ENCODE measurements at regions of chr19 and their contacts with region 1.

Region 1: DNA sequence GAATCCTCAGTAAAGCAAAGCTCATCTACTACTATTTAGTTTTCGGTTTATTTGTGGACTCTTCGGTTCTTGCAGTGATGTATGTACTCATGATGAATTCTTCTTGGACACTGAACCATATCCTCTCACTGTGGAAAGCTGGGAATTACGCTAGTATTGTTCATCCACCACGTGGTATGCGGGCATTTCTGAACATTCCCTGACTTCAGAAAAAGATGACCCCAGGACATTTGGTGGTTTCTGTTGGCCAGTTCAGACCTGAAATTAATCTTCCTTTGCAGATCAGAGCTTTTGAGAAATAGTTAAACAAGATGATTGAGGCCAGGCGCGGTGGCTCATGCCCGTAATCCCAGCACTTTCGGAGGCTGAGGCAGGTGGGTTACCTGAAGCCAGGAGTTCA is 25.3 kb upstream of the FBN3 start:
- DNase-seq: no peak
- ATAC-seq: no peak
- H3K4me3 ChIP-seq: no peak overlapping the region
- H3K27ac ChIP-seq: no peak overlapping the region
- H3K4me1 ChIP-seq: no peaks in the 10 kb centered on the region
- H3K27me3 ChIP-seq: no peaks in the 10 kb centered on the region
- CTCF ChIP-seq: no peak
- POLR2A ChIP-seq: no peak
- RAD21 ChIP-seq: no peak

Region 2: GRCh38 chr19:8238251-8238650 is 63.5 kb after region 1 on chr19:
- CTCF ChIA-PET with region 1: no interaction called
- POLR2A ChIA-PET with region 1: no interaction called
- RAD21 ChIA-PET with region 1: no interaction called
- intact Hi-C with region 1: loop called (anchors 2 kb)
- DNase-seq: no peak
- ATAC-seq: no peak
- H3K4me3 ChIP-seq: no peak overlapping the region
- H3K27ac ChIP-seq: no peak overlapping the region
- H3K4me1 ChIP-seq: peaks cover 16% of the 10 kb centered on the region in 2 experiments
- H3K27me3 ChIP-seq: no peaks in the 10 kb centered on the region
- CTCF ChIP-seq: no peak
- POLR2A ChIP-seq: no peak
- RAD21 ChIP-seq: no peak